ENCODE measurements at regions of chr5 and their contacts with region 1.

Region 1: GRCh38 chr5:154603978-154604679 is 126.1 kb upstream of the HAND1 start:
- DNase-seq: no peak
- H3K4me3 ChIP-seq: no peak overlapping the region
- H3K27ac ChIP-seq: no peak overlapping the region
- H3K4me1 ChIP-seq: no peaks in the 10 kb centered on the region
- H3K27me3 ChIP-seq: no peaks in the 10 kb centered on the region
- CTCF ChIP-seq: no peak
- POLR2A ChIP-seq: no peak

Region 2: GRCh38 chr5:153981905-153982605 is 622.1 kb before region 1 on chr5:
- intact Hi-C with region 1: loop called (anchors 10 kb)
- DNase-seq: no peak
- H3K4me3 ChIP-seq: no peak overlapping the region
- H3K27ac ChIP-seq: no peak overlapping the region
- H3K4me1 ChIP-seq: no peaks in the 10 kb centered on the region
- H3K27me3 ChIP-seq: no peaks in the 10 kb centered on the region
- CTCF ChIP-seq: no peak
- POLR2A ChIP-seq: no peak

Region 3: DNA sequence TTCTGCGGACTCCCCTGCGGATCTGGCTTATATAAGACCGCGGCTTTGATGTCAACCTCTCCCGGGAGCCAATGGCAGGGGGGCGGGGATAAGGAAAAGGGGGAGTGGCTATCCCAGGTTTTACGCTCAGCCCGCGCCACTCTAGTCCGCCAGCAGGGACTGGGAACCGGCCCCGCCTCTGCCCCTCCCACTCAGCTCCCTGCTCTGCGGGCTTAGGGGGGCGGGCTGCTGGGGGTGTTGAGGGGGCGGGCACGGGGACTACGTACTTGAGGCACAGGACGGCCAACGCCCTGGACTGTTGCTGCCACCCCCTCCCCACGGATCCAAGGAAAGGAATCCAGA is 125.9 kb before region 1 on chr5 and contains the start of gene HAND1:
- intact Hi-C with region 1: loop called (anchors 10 kb)
- DNase-seq: no peak
- H3K4me3 ChIP-seq: peak within 1 kb of the TSS in 1 of 2 donors; percentile 13
- H3K27ac ChIP-seq: no peak within 1 kb of the TSS
- H3K4me1 ChIP-seq: peaks cover 27% of the 10 kb centered on the region
- H3K27me3 ChIP-seq: no peaks in the 10 kb centered on the region
- CTCF ChIP-seq: no peak
- POLR2A ChIP-seq: no peak
- total RNA-seq, gene HAND1: not detected